ENCODE measurements at regions of chr2 and their contacts with region 1.

Region 1: DNA sequence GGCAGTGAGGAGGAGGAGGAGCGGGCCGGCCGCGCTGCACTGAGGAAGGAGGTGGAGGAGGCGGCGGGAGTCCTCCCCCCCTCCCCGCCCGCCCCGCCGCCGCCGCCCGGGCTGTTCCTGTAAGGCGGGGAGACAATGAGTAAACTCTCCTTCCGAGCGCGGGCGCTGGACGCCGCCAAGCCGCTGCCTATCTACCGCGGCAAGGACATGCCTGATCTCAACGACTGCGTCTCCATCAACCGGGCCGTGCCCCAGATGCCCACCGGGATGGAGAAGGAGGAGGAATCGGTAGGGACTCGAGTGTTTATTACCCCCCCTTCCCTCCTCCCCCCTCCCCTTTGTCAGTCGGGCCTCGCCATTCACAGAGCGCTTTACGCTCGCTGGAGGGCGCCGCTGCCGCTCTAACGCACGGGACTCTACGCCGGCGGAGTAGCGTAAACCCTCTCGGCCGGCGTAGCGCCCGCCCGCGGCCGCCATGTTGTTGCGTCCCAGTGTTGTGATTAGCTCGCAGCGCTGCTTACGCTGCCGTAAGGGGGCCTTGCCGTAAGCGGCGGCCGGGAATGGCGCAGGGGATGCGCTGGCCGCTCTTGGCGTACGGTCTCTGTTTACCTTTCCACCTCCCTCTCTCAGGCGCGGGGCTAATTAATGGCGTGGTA is 460 bp downstream of the EPC2 start:
- DNase-seq: peak; percentile 86 to 98 (median 94)
- ATAC-seq: peak; percentile 73
- H3K4me3 ChIP-seq: peak overlapping the region; percentile 93
- H3K4me3 Mint-ChIP-seq: peak overlapping the region; percentile 92
- H3K27ac ChIP-seq: peak overlapping the region; percentile 97 to 98
- H3K27ac Mint-ChIP-seq: peak overlapping the region; percentile 93
- H3K4me1 ChIP-seq: peaks cover 20% of the 10 kb centered on the region
- H3K4me1 Mint-ChIP-seq: peaks cover 40% of the 10 kb centered on the region
- H3K27me3 ChIP-seq: no peaks in the 10 kb centered on the region
- H3K27me3 Mint-ChIP-seq: no peaks in the 10 kb centered on the region
- CTCF ChIP-seq: no peak

Region 2: DNA sequence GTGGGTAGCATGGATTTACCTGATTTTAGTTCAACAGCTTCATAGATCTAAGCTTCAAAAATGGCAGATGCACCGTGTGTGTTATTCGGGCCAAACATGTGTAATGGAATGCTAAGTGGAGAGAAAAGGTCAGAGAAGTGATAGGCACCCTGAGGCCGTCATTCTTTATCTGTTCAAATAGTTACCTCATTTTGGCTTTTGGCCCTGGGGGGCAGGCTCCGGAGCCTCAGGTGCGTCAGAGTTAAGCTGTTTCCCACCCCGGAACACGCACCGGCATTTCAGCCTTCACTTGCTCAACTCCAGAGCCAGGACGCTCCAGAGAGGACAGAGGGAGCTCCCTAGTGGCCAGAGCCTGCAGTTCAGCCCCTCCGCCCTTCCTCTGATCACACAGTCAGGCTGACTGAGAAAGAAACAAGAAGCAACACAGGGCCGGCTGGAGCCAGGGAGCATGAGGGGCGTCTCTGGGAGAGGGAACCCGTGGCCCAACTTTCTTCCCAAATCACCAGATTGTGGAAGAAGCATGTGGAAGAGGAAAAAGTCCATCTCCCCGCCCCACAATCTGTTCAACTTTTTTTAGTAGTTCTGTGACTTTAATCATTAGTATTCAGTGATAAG is 135.6 kb before region 1 on chr2:
- CTCF ChIA-PET with region 1: interaction called, 6 read pairs
- POLR2A ChIA-PET with region 1: interaction called, 27 read pairs
- intact Hi-C with region 1: no loop called
- DNase-seq: peak; percentile 74 to 90 (median 79)
- ATAC-seq: peak; percentile 100
- H3K4me3 ChIP-seq: peak overlapping the region; percentile 50
- H3K4me3 Mint-ChIP-seq: peak overlapping the region; percentile 65
- H3K27ac ChIP-seq: peak overlapping the region in 1 of 2 donors; percentile 46
- H3K27ac Mint-ChIP-seq: peak overlapping the region; percentile 77
- H3K4me1 ChIP-seq: peaks cover 7% of the 10 kb centered on the region
- H3K4me1 Mint-ChIP-seq: peaks cover 14% of the 10 kb centered on the region
- H3K27me3 ChIP-seq: no peaks in the 10 kb centered on the region
- H3K27me3 Mint-ChIP-seq: no peaks in the 10 kb centered on the region
- CTCF ChIP-seq: peak; percentile 78

Region 3: GRCh38 chr2:148552675-148553331 is 92.2 kb before region 1 on chr2:
- CTCF ChIA-PET with region 1: no interaction called
- POLR2A ChIA-PET with region 1: interaction called, 25 read pairs
- intact Hi-C with region 1: loop called in 1 of 2 experiments (anchors 5 kb)
- DNase-seq: peak in 5 of 14 experiments; percentile 18 to 70 (median 67)
- ATAC-seq: peak; percentile 81
- H3K4me3 ChIP-seq: peak overlapping the region; percentile 57
- H3K4me3 Mint-ChIP-seq: no peak overlapping the region
- H3K27ac ChIP-seq: peak overlapping the region; percentile 46 to 65
- H3K27ac Mint-ChIP-seq: no peak overlapping the region
- H3K4me1 ChIP-seq: peaks cover 14% of the 10 kb centered on the region
- H3K4me1 Mint-ChIP-seq: no peaks in the 10 kb centered on the region
- H3K27me3 ChIP-seq: no peaks in the 10 kb centered on the region
- H3K27me3 Mint-ChIP-seq: no peaks in the 10 kb centered on the region
- CTCF ChIP-seq: no peak

Region 4: GRCh38 chr2:148674063-148675020 is 29.3 kb after region 1 on chr2:
- CTCF ChIA-PET with region 1: interaction called, 20 read pairs
- POLR2A ChIA-PET with region 1: interaction called, 5 read pairs
- intact Hi-C with region 1: no loop called
- DNase-seq: peak in 8 of 14 experiments; percentile 3 to 69 (median 39)
- ATAC-seq: peak; percentile 71
- H3K4me3 ChIP-seq: no peak overlapping the region
- H3K4me3 Mint-ChIP-seq: peak overlapping the region; percentile 68
- H3K27ac ChIP-seq: no peak overlapping the region
- H3K27ac Mint-ChIP-seq: no peak overlapping the region
- H3K4me1 ChIP-seq: peaks cover 19% of the 10 kb centered on the region
- H3K4me1 Mint-ChIP-seq: peaks cover 75% of the 10 kb centered on the region
- H3K27me3 ChIP-seq: no peaks in the 10 kb centered on the region
- H3K27me3 Mint-ChIP-seq: no peaks in the 10 kb centered on the region
- CTCF ChIP-seq: peak; percentile 69

Region 5: DNA sequence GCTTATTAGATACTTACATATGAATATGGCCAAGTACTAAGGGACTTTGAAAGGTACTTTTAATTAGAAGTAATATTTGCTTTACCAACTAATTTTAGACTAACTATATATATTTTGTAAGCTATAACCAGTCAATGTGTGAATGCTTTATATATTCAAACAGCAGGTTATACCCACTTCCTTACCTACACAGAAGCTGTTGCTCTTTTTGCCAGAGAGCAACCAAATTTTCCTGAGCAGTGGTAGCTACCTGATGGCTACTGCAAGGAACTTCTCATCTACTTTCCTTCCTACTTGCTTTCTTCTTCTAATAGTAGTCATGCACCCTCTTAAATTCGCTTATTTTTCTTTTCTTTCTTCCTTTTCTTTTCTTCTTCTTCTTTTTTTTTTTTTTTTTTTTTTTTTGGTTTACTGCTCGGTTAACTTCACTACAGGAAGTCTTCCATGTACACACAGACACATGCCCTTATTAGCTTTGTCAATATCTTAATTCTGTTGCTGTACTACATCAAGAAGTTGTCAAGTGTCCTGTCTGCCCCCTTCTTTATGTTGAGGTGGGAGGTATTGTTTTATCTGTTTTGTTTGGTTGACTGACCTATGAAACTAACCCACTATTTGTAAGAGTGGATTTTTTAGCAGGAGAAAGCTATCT is 94.6 kb after region 1 on chr2:
- CTCF ChIA-PET with region 1: no interaction called
- POLR2A ChIA-PET with region 1: interaction called, 15 read pairs
- intact Hi-C with region 1: no loop called
- DNase-seq: no peak
- ATAC-seq: peak; percentile 14
- H3K4me3 ChIP-seq: no peak overlapping the region
- H3K4me3 Mint-ChIP-seq: peak overlapping the region; percentile 26
- H3K27ac ChIP-seq: no peak overlapping the region
- H3K27ac Mint-ChIP-seq: peak overlapping the region; percentile 22
- H3K4me1 ChIP-seq: peaks cover 9% of the 10 kb centered on the region
- H3K4me1 Mint-ChIP-seq: peaks cover 80% of the 10 kb centered on the region
- H3K27me3 ChIP-seq: no peaks in the 10 kb centered on the region
- H3K27me3 Mint-ChIP-seq: no peaks in the 10 kb centered on the region
- CTCF ChIP-seq: no peak

Region 6: GRCh38 chr2:148926291-148926961 is 281.4 kb after region 1 on chr2:
- CTCF ChIA-PET with region 1: no interaction called
- POLR2A ChIA-PET with region 1: interaction called, 11 read pairs
- intact Hi-C with region 1: no loop called
- DNase-seq: peak; percentile 9 to 74 (median 46)
- ATAC-seq: peak; percentile 87
- H3K4me3 ChIP-seq: peak overlapping the region; percentile 44
- H3K4me3 Mint-ChIP-seq: peak overlapping the region; percentile 79
- H3K27ac ChIP-seq: peak overlapping the region in 1 of 2 donors; percentile 33
- H3K27ac Mint-ChIP-seq: peak overlapping the region; percentile 61
- H3K4me1 ChIP-seq: peaks cover 16% of the 10 kb centered on the region
- H3K4me1 Mint-ChIP-seq: peaks cover 25% of the 10 kb centered on the region
- H3K27me3 ChIP-seq: no peaks in the 10 kb centered on the region
- H3K27me3 Mint-ChIP-seq: no peaks in the 10 kb centered on the region
- CTCF ChIP-seq: peak; percentile 76

Region 7: DNA sequence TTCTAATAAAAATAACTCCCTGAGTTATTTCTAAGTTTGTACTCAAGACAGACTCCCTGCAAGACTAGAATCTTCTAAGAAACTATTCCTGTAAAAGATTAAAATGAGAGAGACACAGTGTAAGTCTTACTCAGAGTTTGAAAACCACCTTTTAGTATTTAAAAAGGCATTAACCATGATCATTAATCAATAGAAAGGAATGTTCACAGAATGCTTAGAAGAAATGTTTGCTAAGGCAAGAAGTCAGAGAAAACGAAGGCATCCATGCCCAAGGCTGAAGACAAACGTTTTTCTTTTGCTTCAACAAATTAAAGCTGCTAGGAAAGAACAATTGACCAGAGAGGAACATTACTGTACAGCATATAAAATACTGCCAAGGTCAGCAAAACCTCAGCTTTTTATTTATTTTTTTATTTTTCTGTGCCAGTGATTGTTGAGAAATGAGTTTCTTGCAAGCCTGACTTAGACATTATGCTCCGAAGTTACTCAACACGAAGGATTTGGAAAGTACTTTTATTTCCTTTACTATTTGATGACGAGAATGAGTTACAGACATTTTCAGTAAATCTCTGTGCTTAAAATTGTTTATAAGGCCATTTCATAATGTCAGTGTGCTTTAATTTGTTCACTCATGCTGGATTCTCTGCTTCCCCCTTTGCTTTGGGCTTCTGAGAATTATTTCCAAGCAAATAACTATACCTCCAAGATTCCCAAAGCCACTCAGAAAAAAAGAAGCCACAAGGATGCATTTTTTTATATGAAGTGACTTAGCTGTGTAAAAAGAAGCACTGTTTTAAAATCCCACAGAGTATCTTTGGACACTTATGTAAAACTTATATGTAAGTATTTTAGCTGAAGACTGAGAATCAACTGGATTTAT is 1822.0 kb after region 1 on chr2:
- CTCF ChIA-PET with region 1: no interaction called
- POLR2A ChIA-PET with region 1: no interaction called
- intact Hi-C with region 1: no loop called
- DNase-seq: no peak
- ATAC-seq: no peak
- H3K4me3 ChIP-seq: no peak overlapping the region
- H3K4me3 Mint-ChIP-seq: no peak overlapping the region
- H3K27ac ChIP-seq: no peak overlapping the region
- H3K27ac Mint-ChIP-seq: no peak overlapping the region
- H3K4me1 ChIP-seq: no peaks in the 10 kb centered on the region
- H3K4me1 Mint-ChIP-seq: no peaks in the 10 kb centered on the region
- H3K27me3 ChIP-seq: no peaks in the 10 kb centered on the region
- H3K27me3 Mint-ChIP-seq: no peaks in the 10 kb centered on the region
- CTCF ChIP-seq: no peak

Measured in CD4-positive, alpha-beta T cell (primary cell).